ENCODE measurements at regions of chr14 and their contacts with region 1.

Region 1: DNA sequence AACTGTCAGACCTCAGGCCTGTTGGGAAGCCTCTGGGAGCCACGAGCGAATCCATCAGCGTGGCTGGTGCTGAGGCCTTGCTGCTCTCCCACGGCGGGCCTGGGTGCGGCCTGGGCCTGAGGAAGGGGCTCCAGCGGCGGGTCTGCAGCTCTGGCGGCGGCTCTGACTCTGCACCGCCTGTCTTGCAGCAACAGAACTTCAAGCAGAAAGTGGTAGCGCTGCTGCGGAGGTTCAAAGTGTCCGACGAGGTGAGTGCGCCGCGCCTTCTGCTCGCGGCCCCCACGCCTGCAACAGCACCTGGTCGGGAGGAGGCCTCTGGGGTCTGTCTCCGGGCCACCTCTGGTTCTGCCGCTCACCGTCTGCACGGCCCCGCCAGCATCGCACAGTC is 28.7 kb upstream of the TEX22 start:
- DNase-seq: no peak
- H3K4me3 ChIP-seq: no peak overlapping the region
- H3K4me3 Mint-ChIP-seq: no peak overlapping the region
- H3K27ac Mint-ChIP-seq: no peak overlapping the region
- H3K4me1 ChIP-seq: no peaks in the 10 kb centered on the region
- H3K4me1 Mint-ChIP-seq: no peaks in the 10 kb centered on the region
- H3K27me3 ChIP-seq: no peaks in the 10 kb centered on the region
- H3K27me3 Mint-ChIP-seq: no peaks in the 10 kb centered on the region
- CTCF ChIP-seq: no peak

Region 2: GRCh38 chr14:105480952-105481801 is 111.5 kb after region 1 on chr14:
- CTCF ChIA-PET with region 1: interaction called, 5 read pairs
- POLR2A ChIA-PET with region 1: no interaction called
- intact Hi-C with region 1: loop called (anchors 2 kb)
- DNase-seq: peak; percentile 85 to 95
- H3K4me3 ChIP-seq: peak overlapping the region; percentile 32
- H3K4me3 Mint-ChIP-seq: peak overlapping the region; percentile 78
- H3K27ac Mint-ChIP-seq: peak overlapping the region; percentile 96
- H3K4me1 ChIP-seq: peaks cover 27% of the 10 kb centered on the region
- H3K4me1 Mint-ChIP-seq: peaks cover 13% of the 10 kb centered on the region
- H3K27me3 ChIP-seq: no peaks in the 10 kb centered on the region; the same call in 1 of the 2 replicates
- H3K27me3 Mint-ChIP-seq: peaks cover 7% of the 10 kb centered on the region
- CTCF ChIP-seq: peak; percentile 92 to 96

Region 3: DNA sequence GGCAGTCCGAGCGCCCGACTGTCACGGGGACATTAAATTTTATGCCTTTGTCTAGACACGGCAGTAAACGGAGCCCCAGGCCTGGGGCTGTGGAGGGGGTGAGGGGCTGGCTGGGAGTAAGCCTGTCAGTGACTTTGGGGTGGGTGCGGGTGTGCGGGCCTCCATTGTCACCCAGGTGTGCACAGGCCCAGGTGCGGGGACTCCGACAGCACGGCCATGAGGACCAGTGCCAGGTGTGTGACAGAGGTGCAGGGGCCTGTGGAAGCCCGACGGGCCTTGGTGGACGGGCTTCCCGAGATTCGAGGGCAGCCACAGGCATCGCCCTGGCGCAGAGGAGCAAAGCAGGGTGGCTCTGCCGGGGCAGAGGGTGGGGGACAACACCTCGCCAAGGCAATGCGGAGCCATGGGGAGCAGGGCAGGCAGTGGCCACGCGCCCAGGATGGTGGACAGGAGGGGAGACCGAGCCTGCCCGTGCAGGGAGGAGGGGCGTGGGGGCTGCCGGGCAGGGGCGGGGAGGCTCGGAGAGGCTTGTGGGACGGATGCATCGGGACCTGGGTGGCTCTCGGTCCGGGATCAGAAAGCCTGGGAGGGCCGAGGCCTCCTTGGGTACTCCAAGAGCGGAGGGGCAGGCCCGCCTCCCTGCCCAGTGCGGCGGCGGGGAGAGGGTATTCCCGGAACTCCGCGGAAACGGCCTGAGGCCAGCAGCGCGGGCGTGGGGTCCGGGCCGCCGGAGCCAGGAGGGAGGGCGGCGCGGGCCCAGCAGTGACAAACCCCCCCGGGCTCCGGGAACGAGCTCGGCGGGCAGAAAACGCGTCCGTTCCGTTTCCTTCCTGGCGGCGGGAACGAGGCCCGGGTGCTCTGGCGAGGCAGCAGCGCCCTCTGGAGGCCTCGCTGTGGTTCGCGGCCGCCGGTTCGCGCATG is 158.3 kb after region 1 on chr14:
- CTCF ChIA-PET with region 1: interaction called, 4 read pairs
- POLR2A ChIA-PET with region 1: no interaction called
- intact Hi-C with region 1: loop called (anchors 2 kb)
- DNase-seq: peak in 1 of 2 experiments; percentile 83
- H3K4me3 ChIP-seq: peak overlapping the region; percentile 31
- H3K4me3 Mint-ChIP-seq: peak overlapping the region; percentile 62
- H3K27ac Mint-ChIP-seq: no peak overlapping the region
- H3K4me1 ChIP-seq: peaks cover 12% of the 10 kb centered on the region
- H3K4me1 Mint-ChIP-seq: no peaks in the 10 kb centered on the region
- H3K27me3 ChIP-seq: no peaks in the 10 kb centered on the region
- H3K27me3 Mint-ChIP-seq: peaks cover 7% of the 10 kb centered on the region
- CTCF ChIP-seq: peak; percentile 74 to 76

Measured in Caco-2 (cell line).